ENCODE measurements at regions of chr15 and their contacts with region 1.

Region 1: GRCh38 chr15:56052395-56053045 is 59.1 kb upstream of the NEDD4 start:
- DNase-seq: no peak
- H3K4me3 Mint-ChIP-seq: no peak overlapping the region
- H3K27ac Mint-ChIP-seq: peak overlapping the region; percentile 70
- H3K4me1 Mint-ChIP-seq: peaks cover 35% of the 10 kb centered on the region
- H3K27me3 Mint-ChIP-seq: no peaks in the 10 kb centered on the region
- CTCF ChIP-seq: peak; percentile 57

Region 2: DNA sequence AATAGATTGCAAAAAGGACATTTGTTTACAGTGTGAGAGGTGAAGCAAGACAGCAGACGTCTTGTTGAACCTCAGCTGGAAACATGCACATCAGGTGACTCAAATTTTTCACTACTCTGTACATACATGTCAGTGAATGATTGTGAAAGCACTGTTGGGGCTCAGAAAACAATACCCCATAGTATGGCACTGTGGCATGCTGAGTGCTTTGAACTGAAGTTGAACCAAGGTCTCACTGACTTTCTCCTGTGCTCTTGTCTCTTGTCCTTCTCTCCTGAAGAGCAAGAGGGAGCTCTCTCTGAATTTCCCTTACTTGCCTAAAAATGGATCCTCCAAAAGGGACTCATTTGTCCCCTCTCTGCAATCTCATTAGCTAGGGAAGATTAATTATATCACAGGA is 34.6 kb before region 1 on chr15:
- CTCF ChIA-PET with region 1: no interaction called
- intact Hi-C with region 1: loop called (anchors 5 kb)
- DNase-seq: no peak
- H3K4me3 Mint-ChIP-seq: no peak overlapping the region
- H3K27ac Mint-ChIP-seq: no peak overlapping the region
- H3K4me1 Mint-ChIP-seq: peaks cover 16% of the 10 kb centered on the region
- H3K27me3 Mint-ChIP-seq: no peaks in the 10 kb centered on the region
- CTCF ChIP-seq: peak; percentile 13

Region 3: DNA sequence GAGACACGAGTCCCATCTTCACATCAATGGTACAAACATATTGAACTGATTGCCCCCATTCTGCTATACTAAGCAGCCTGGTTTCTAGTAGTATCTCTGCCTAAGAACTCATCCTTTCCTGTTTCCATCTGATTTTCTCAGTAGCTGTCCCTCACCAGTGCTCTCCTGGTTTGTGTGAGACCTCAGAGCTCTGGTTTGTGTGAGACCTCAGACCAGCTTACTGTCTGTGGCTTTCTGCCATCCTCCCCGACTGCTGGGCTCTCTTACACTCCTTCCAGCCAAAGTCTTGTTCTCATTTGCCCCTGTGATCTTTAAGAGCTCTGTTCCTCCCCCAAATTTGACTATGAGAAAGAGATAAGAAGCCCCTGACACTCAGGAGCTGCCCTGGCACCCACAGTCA is 18.0 kb before region 1 on chr15:
- CTCF ChIA-PET with region 1: no interaction called
- intact Hi-C with region 1: no loop called
- DNase-seq: no peak
- H3K4me3 Mint-ChIP-seq: no peak overlapping the region
- H3K27ac Mint-ChIP-seq: no peak overlapping the region
- H3K4me1 Mint-ChIP-seq: peaks cover 35% of the 10 kb centered on the region
- H3K27me3 Mint-ChIP-seq: no peaks in the 10 kb centered on the region
- CTCF ChIP-seq: no peak

Region 4: GRCh38 chr15:56168394-56168793 is 115.9 kb after region 1 on chr15:
- CTCF ChIA-PET with region 1: no interaction called
- intact Hi-C with region 1: no loop called
- DNase-seq: no peak
- H3K4me3 Mint-ChIP-seq: no peak overlapping the region
- H3K27ac Mint-ChIP-seq: no peak overlapping the region
- H3K4me1 Mint-ChIP-seq: no peaks in the 10 kb centered on the region
- H3K27me3 Mint-ChIP-seq: no peaks in the 10 kb centered on the region
- CTCF ChIP-seq: no peak

Measured in Calu3 (cell line).